Cardiac septum (tissue), 1 donor: ENCODE measurements at regions of chr2 and their contacts with region 1.

Region 1: GRCh38 chr2:26330113-26330549 is 15.8 kb upstream of the SELENOI start:
- DNase-seq: peak; percentile 93

Region 2: GRCh38 chr2:26235085-26235484 is 95.0 kb before region 1 on chr2:
- intact Hi-C with region 1: loop called (anchors 2 kb)
- DNase-seq: no peak

Region 3: DNA sequence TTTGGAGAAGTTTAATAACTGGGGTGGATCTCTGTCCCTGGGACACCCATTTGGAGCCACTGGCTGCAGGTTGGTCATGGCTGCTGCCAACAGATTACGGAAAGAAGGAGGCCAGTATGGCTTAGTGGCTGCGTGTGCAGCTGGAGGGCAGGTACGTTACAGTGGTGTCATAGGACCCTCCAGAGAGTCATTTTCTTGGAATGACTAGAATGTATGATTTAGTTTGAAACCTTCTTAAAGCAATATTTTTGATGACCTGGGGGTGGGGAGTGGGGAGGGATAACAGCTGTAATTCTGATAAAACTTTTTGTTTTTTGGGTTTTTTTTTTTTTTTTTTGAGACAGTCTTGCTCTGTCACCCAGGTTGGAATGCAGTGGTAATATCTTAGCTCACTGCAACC is 44.7 kb before region 1 on chr2:
- intact Hi-C with region 1: loop called (anchors 5 kb)
- DNase-seq: no peak